ENCODE measurements at regions of chr16 and their contacts with region 1.

Region 1: DNA sequence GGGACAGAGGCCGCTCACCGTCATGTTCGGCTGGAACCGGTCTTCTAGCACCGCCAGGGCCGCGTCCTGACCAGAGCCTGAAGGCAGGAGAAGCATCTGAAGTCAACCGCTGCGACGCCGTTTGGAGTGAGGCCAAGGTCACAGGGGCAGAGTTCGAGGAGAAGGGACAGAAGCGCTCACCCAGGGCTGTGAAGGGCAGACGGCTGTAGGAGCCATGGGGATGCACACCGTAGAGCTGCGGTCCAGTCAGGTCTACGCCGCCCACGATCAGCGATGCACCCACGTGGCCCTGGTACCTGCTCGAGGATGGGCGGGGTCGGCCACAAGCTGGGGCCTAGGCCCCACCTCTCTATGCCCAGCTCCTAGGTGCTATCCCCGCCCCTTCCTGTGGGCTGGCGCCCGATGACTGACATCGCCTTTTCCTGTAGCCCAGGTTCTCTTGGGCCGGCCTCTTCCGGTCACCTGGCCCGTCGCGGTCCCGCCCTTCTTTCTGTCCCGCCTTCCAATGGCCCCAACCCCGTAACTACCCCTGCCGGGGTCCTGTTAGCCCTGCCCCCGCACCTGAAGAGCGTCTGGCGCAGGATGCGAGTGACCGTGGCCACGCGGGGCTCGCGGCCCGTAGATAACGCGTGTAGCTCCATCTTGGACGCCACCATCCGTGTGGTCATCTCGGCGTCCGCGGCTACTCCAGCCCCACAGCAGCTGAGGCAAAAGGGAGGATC is 1.1 kb downstream of the PSMB10 start:
- DNase-seq: peak; percentile 85
- ATAC-seq: peak; percentile 89
- H3K4me3 Mint-ChIP-seq: peak overlapping the region; percentile 99
- H3K27ac Mint-ChIP-seq: peak overlapping the region; percentile 98
- H3K4me1 Mint-ChIP-seq: peaks cover 31% of the 10 kb centered on the region
- H3K27me3 Mint-ChIP-seq: no peaks in the 10 kb centered on the region
- CTCF ChIP-seq: no peak

Region 2: GRCh38 chr16:67660564-67661028 is 275.0 kb before region 1 on chr16 and contains the start of gene PARD6A:
- CTCF ChIA-PET with region 1: no interaction called
- POLR2A ChIA-PET with region 1: no interaction called
- intact Hi-C with region 1: loop called (anchors 1 kb)
- DNase-seq: peak; percentile 87
- ATAC-seq: peak; percentile 80
- H3K4me3 Mint-ChIP-seq: peak within 1 kb of the TSS; percentile 94
- H3K27ac Mint-ChIP-seq: peak within 1 kb of the TSS; percentile 94
- H3K4me1 Mint-ChIP-seq: peaks cover 28% of the 10 kb centered on the region
- H3K27me3 Mint-ChIP-seq: no peaks in the 10 kb centered on the region
- CTCF ChIP-seq: no peak
- total RNA-seq, gene PARD6A: 5.9 and 6.0 TPM in 2 replicates

Region 3: GRCh38 chr16:67685388-67686112 is 250.0 kb before region 1 on chr16:
- CTCF ChIA-PET with region 1: no interaction called
- POLR2A ChIA-PET with region 1: no interaction called
- intact Hi-C with region 1: no loop called
- DNase-seq: no peak
- ATAC-seq: peak; percentile 92
- H3K4me3 Mint-ChIP-seq: peak overlapping the region; percentile 53
- H3K27ac Mint-ChIP-seq: peak overlapping the region; percentile 77
- H3K4me1 Mint-ChIP-seq: peaks cover 27% of the 10 kb centered on the region
- H3K27me3 Mint-ChIP-seq: no peaks in the 10 kb centered on the region
- CTCF ChIP-seq: no peak

Region 4: DNA sequence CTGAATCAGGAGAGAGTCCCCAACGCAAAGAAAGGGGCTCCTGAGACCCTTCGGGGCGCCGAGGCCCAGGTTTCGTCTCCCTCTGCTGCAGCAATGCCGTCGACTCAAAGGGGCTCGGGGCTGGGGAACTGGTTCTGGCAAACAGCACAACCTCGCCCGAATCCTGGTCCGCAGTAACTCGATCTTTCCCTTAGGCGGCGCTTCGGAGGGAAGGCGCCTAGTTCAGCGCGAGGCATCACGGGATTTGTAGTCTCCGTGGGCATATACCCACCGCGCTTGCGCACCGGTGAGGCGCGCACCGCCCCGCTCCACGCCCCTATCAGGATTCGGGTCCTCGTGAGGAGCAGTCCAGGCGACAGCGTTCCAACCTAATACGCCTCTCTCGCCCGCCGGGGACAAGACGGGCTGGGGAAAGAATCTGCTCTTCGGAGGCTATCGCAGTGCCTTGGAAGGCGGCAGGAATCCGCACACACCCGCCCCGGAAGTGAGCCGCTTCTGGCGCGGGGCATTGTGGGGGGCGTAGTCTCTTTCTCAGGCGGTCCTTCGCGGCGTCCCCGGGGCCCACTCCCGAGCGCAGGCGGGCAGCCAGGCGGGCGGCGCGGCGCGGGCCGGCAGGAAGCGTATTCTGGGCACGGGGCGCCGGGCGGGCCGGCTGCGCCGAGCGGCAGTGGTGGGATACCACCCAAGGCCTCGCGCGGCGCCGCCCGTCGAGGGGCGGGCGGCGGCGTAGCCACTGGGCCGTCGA is 93.6 kb before region 1 on chr16 and contains the start of gene THAP11:
- CTCF ChIA-PET with region 1: no interaction called
- POLR2A ChIA-PET with region 1: interaction called, 11 read pairs
- intact Hi-C with region 1: loop called (anchors 1 kb)
- DNase-seq: peak; percentile 95
- ATAC-seq: peak; percentile 54
- H3K4me3 Mint-ChIP-seq: peak within 1 kb of the TSS; percentile 95
- H3K27ac Mint-ChIP-seq: peak within 1 kb of the TSS; percentile 95
- H3K4me1 Mint-ChIP-seq: peaks cover 43% of the 10 kb centered on the region
- H3K27me3 Mint-ChIP-seq: no peaks in the 10 kb centered on the region
- CTCF ChIP-seq: peak; percentile 38
- total RNA-seq, gene THAP11: 24.2 and 24.9 TPM in 2 replicates

Region 5: GRCh38 chr16:67892899-67893742 is 42.4 kb before region 1 on chr16 and contains the start of gene PSKH1:
- CTCF ChIA-PET with region 1: interaction called, 3 read pairs
- POLR2A ChIA-PET with region 1: interaction called, 15 read pairs
- intact Hi-C with region 1: loop called (anchors 1 kb)
- DNase-seq: peak; percentile 80
- ATAC-seq: peak; percentile 99
- H3K4me3 Mint-ChIP-seq: peak within 1 kb of the TSS; percentile 94
- H3K27ac Mint-ChIP-seq: peak within 1 kb of the TSS; percentile 86
- H3K4me1 Mint-ChIP-seq: peaks cover 31% of the 10 kb centered on the region
- H3K27me3 Mint-ChIP-seq: no peaks in the 10 kb centered on the region
- CTCF ChIP-seq: no peak
- total RNA-seq, gene PSKH1: 19.2 and 22.0 TPM in 2 replicates

Region 6: GRCh38 chr16:67979955-67980678 is 44.6 kb after region 1 on chr16 and contains the start of gene DPEP3:
- CTCF ChIA-PET with region 1: no interaction called
- POLR2A ChIA-PET with region 1: interaction called, 22 read pairs
- intact Hi-C with region 1: loop called (anchors 1 kb)
- DNase-seq: no peak
- ATAC-seq: no peak
- H3K4me3 Mint-ChIP-seq: no peak within 1 kb of the TSS
- H3K27ac Mint-ChIP-seq: no peak within 1 kb of the TSS
- H3K4me1 Mint-ChIP-seq: peaks cover 33% of the 10 kb centered on the region
- H3K27me3 Mint-ChIP-seq: no peaks in the 10 kb centered on the region
- CTCF ChIP-seq: no peak
- total RNA-seq, gene DPEP3: 0.29 and 0.38 TPM in 2 replicates

Region 7: DNA sequence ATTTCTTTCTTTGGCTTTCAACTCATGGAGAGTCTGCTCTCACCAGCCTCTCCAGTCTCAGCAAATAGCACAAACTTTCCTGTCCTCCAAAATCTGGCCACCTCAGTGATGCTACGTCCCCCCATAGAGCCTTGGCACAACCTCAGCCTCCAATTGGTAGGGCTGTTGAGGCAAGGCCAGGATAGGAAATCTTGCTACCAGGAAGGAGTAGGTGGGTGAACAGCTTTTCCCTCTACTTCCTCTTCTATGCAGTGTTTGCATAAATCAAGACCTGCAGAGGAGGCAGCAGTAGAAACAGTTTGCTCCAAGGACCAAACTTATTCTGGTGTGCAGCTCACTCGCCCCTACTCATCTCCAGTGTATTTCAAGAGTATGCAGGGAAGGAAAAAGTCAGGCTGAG is 64.4 kb after region 1 on chr16:
- CTCF ChIA-PET with region 1: interaction called, 6 read pairs
- POLR2A ChIA-PET with region 1: interaction called, 30 read pairs
- intact Hi-C with region 1: no loop called
- DNase-seq: no peak
- ATAC-seq: peak; percentile 27
- H3K4me3 Mint-ChIP-seq: peak overlapping the region; percentile 74
- H3K27ac Mint-ChIP-seq: peak overlapping the region; percentile 87
- H3K4me1 Mint-ChIP-seq: peaks cover 72% of the 10 kb centered on the region
- H3K27me3 Mint-ChIP-seq: no peaks in the 10 kb centered on the region
- CTCF ChIP-seq: no peak

Region 8: GRCh38 chr16:68022704-68023522 is 87.3 kb after region 1 on chr16 and contains the starts of genes DDX28 and DUS2:
- CTCF ChIA-PET with region 1: interaction called, 5 read pairs
- POLR2A ChIA-PET with region 1: interaction called, 28 read pairs
- intact Hi-C with region 1: loop called (anchors 1 kb)
- DNase-seq: peak; percentile 97
- ATAC-seq: peak; percentile 93
- H3K4me3 Mint-ChIP-seq: peak within 1 kb of the TSS; percentile 99
- H3K27ac Mint-ChIP-seq: peak within 1 kb of the TSS; percentile 97
- H3K4me1 Mint-ChIP-seq: peaks cover 31% of the 10 kb centered on the region
- H3K27me3 Mint-ChIP-seq: no peaks in the 10 kb centered on the region
- CTCF ChIP-seq: no peak
- total RNA-seq, gene DDX28: 19.2 and 19.7 TPM in 2 replicates
- total RNA-seq, gene DUS2: 54.2 and 62.0 TPM in 2 replicates